Posterior vena cava (tissue), 2 donors: ENCODE measurements at regions of chr9 and their contacts with region 1.

Region 1: DNA sequence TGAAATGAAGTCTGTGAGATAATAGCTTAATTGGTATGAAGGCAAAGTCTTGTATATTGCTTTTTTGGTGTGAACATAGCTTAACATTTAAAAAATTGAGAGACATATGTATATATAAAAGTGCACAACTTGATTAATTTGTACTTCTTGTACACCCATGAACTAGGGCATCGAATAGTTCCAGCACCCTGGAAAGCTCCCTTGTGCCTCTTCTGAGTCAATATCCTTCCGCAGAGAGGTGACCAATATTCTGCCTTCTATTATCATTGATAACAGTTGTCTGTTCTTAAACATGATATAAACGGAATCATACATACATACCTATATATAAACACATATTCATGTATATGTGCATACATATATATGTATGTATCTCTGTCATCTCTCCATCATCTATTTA is 185.4 kb downstream of the PHF2 start:
- DNase-seq: no peak

Region 2: GRCh38 chr9:91766315-91767069 is 1995.3 kb before region 1 on chr9:
- intact Hi-C with region 1: loop called in 1 of 2 experiments (anchors 10 kb)
- DNase-seq: no peak

Region 3: DNA sequence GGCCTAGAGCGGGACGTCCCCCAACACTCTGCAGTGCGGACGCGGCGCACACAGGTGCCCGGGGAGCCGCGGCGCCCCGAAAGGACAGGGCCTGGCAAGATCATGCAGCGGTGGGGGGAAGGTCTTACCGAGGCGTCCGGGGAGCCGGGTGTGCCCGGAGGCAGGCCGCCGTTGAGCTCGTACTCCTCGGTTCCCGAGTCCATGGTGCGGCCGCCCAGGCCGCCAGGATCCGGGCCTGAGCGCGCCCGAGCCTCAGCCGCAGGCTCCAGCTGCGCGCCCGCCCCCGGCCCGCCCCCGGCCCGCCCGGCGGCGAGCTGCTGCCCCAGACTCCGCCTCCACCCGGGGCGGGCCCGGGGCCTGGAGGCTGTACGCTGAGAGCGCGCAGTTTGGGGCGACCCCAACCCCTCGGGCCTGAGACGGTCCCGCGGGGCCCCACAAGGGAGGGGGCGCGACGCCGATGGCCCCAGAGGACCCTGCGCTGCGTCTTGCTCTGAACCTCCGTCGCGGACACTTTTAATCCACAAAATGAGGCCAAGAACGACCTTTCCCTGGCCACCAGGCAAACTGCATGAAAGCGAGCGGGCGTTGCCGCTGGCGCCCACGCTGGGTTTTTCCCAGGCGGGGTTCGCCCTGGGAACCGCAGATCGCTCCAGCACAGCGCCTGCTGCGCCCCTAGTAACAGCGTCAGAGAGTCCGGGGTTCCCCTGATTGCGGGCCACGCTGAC is 627.6 kb before region 1 on chr9 and contains the start of gene NINJ1:
- intact Hi-C with region 1: no loop called
- DNase-seq: peak; percentile 92
- total RNA-seq, gene NINJ1: 30.6 to 39.5 TPM